ENCODE measurements at regions of chr10 and their contacts with region 1.

Region 1: DNA sequence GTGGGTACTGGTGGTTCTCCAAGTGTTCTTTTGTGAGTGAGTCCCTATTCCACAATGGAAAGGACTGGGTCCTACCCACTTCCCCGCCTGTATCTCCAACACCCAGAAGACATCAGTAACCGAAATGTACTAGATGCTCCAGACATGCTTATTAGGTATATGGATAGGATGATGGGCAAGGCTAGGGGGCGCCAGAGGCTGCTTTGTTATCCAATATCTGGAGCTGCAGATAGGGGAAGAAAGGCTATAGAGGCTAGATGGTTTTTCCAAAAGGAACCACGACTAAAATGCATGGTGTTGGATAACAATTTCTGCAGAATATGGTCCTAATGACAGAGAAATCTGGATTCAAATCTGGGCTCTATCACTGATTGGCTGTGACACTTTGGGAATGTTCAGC is 56.2 kb upstream of the TM9SF3 start:
- DNase-seq: no peak
- H3K4me3 ChIP-seq: no peak overlapping the region
- CTCF ChIP-seq: peak; percentile 10

Region 2: DNA sequence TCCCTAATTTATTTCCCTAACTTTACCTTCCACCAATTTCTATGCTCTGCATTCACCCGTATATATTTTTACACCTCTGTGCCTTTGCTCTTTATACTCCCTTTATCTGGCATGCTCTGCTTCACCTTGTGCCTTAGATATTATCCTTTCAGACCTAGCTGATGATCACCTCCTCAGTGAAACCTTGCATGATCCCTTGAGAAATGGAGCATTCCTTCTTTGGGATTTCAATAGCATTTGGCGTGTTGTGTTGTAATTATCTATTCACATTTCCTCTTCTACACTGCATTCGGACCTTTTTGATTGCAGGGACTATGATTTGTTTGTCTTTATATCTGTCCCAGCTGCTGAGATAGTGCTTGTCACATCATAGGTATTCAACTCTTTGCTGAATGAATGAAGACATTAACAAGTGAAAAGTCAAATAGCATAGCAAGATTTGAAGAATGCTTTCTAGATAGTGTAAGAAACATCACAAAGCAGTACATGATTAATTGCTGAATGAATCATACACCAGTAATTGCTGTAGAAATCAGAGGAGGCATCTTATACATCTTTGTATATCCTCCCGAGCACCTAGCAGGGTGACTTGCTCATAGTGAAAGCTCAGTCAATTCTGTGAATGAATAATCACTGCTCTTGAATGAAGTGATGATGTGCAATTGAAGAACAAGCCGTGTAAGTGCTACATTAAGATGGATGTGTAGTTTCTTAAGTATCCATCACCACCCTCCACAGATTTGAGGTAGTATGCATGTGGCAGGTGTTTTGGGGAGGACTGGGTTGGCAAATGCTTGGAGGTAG is 54.2 kb before region 1 on chr10:
- CTCF ChIA-PET with region 1: no interaction called
- POLR2A ChIA-PET with region 1: no interaction called
- DNase-seq: no peak
- H3K4me3 ChIP-seq: no peak overlapping the region
- CTCF ChIP-seq: no peak

Region 3: GRCh38 chr10:96618653-96619052 is 24.3 kb before region 1 on chr10:
- CTCF ChIA-PET with region 1: interaction called, 21 read pairs
- POLR2A ChIA-PET with region 1: no interaction called
- DNase-seq: no peak
- H3K4me3 ChIP-seq: no peak overlapping the region
- CTCF ChIP-seq: no peak

Region 4: GRCh38 chr10:96690755-96691731 is 48.1 kb after region 1 on chr10:
- CTCF ChIA-PET with region 1: interaction called, 16 read pairs
- POLR2A ChIA-PET with region 1: no interaction called
- DNase-seq: no peak
- H3K4me3 ChIP-seq: no peak overlapping the region
- CTCF ChIP-seq: no peak

Region 5: GRCh38 chr10:96743988-96744585 is 101.1 kb after region 1 on chr10:
- CTCF ChIA-PET with region 1: interaction called, 23 read pairs
- POLR2A ChIA-PET with region 1: no interaction called
- DNase-seq: no peak
- H3K4me3 ChIP-seq: no peak overlapping the region
- CTCF ChIP-seq: no peak

Region 6: GRCh38 chr10:96765406-96766240 is 122.7 kb after region 1 on chr10:
- CTCF ChIA-PET with region 1: interaction called, 10 read pairs
- POLR2A ChIA-PET with region 1: no interaction called
- DNase-seq: no peak
- H3K4me3 ChIP-seq: no peak overlapping the region
- CTCF ChIP-seq: peak; percentile 81

Region 7: GRCh38 chr10:96830511-96831199 is 187.7 kb after region 1 on chr10:
- CTCF ChIA-PET with region 1: interaction called, 26 read pairs
- POLR2A ChIA-PET with region 1: no interaction called
- DNase-seq: no peak
- H3K4me3 ChIP-seq: no peak overlapping the region
- CTCF ChIP-seq: peak; percentile 71

Region 8: GRCh38 chr10:96858038-96858705 is 215.2 kb after region 1 on chr10:
- CTCF ChIA-PET with region 1: no interaction called
- POLR2A ChIA-PET with region 1: no interaction called
- DNase-seq: no peak
- H3K4me3 ChIP-seq: no peak overlapping the region
- CTCF ChIP-seq: no peak